ENCODE measurements at regions of chr20 and their contacts with region 1.

Region 1: GRCh38 chr20:47487175-47487917 is 14.3 kb upstream of the NCOA3 start:
- DNase-seq: peak; percentile 69
- H3K4me3 Mint-ChIP-seq: peak overlapping the region; percentile 60
- H3K27ac Mint-ChIP-seq: peak overlapping the region; percentile 99
- H3K4me1 Mint-ChIP-seq: peaks cover 53% of the 10 kb centered on the region
- H3K27me3 Mint-ChIP-seq: no peaks in the 10 kb centered on the region

Region 2: DNA sequence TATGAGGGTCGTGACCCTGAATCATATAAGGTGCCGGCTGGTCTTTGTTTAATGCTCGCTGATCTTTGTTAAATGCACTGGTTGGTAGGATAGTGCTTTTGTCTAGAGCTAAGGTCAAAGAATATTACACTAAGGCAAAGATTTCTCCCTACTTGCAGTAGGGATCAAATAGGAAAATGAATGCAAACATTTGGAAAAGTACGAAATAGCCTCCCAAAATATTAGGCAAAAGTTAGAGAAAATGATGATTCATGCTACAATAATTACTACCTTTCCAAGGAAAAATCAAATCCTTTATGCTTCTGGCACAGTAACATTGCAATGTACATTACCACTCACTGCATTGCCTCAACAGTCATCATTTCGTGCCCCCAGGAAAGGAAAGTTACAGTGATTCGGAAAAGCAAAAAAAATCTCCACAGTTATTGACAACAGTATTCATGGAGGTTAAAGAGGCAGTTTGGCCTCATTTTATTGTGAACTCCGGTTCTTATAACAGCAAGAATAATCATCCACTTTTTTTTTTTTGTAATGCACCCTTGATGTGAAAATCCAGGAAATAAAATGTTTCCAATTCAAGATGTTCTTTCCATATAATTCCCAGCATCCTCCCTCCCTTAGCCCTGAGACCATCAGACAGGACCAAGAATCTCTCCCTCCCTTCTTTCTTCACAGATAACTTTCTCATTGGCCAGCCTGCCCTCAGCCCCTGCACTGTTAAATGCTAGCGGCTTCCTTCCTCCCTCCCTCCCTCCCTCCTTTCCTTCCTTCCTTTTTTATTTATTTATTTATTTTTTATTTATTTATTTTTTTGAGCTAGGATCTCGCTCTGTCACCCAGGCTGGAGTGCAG is 69.1 kb before region 1 on chr20:
- intact Hi-C with region 1: loop called (anchors 5 kb)
- DNase-seq: no peak
- H3K4me3 Mint-ChIP-seq: no peak overlapping the region
- H3K27ac Mint-ChIP-seq: no peak overlapping the region
- H3K4me1 Mint-ChIP-seq: peaks cover 18% of the 10 kb centered on the region
- H3K27me3 Mint-ChIP-seq: no peaks in the 10 kb centered on the region

Region 3: DNA sequence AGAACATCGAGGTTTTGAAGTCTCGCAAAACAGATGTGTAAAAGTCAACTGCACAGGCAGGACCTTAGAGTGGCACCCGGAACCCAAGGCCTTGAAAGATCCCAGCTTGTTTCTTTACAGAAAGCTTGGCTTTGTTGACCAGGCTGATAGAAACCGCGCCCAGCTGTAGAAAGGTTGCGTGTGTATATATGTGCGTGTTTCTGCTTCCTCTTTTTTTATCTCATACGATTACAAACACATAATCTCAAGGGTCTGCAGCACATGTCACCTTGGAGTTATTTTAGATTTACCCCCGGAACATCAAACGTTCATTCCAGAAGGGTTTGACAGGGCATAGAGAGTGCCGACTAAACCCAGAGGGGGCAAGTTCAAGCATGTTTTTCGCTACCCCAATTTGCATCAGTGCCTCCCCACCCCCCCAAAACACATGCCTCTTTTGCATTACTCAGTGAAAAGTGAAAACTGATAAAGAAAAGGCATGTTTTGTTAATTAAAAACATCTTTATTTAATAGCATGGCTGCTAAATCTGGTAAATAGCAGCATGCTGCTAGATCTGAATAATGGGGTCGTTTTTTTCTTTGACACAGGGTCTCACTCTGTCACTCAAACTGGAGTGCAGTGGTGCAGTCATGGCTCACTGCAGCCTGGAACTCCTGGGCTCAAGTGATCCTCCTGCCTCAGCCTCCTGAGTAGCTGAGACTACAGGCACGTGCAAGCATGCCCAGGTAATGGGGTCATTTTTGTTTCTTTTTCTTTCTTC is 18.9 kb before region 1 on chr20:
- intact Hi-C with region 1: loop called (anchors 1 kb)
- DNase-seq: no peak
- H3K4me3 Mint-ChIP-seq: no peak overlapping the region
- H3K27ac Mint-ChIP-seq: no peak overlapping the region
- H3K4me1 Mint-ChIP-seq: peaks cover 25% of the 10 kb centered on the region
- H3K27me3 Mint-ChIP-seq: no peaks in the 10 kb centered on the region

Region 4: GRCh38 chr20:47610247-47610944 is 123.0 kb after region 1 on chr20:
- intact Hi-C with region 1: loop called (anchors 1 kb)
- DNase-seq: peak; percentile 64
- H3K4me3 Mint-ChIP-seq: peak overlapping the region; percentile 76
- H3K27ac Mint-ChIP-seq: peak overlapping the region; percentile 99
- H3K4me1 Mint-ChIP-seq: peaks cover 77% of the 10 kb centered on the region
- H3K27me3 Mint-ChIP-seq: no peaks in the 10 kb centered on the region

Measured in activated T-helper 2 cell treated with anti-CD3 and anti-CD28 coated beads, Interferon-gamma antibody, Interleukin-2, Interleukin-4, amounts not matched to agents 10 μg/mL and 5 μg/mL and 100 μg/mL, durations not matched to agents 14 hours and 24 hours and 36 hours (primary cell).